PC-3 (cell line): ENCODE measurements at regions of chr3 and their contacts with region 1.

Region 1: GRCh38 chr3:3836845-3837244 is 37.6 kb downstream of the LRRN1 start:
- DNase-seq: no peak
- ATAC-seq: no peak
- H3K4me3 ChIP-seq: no peak overlapping the region
- H3K27ac ChIP-seq: no peak overlapping the region
- H3K4me1 ChIP-seq: no peaks in the 10 kb centered on the region
- H3K27me3 ChIP-seq: no peaks in the 10 kb centered on the region
- CTCF ChIP-seq: no peak

Region 2: DNA sequence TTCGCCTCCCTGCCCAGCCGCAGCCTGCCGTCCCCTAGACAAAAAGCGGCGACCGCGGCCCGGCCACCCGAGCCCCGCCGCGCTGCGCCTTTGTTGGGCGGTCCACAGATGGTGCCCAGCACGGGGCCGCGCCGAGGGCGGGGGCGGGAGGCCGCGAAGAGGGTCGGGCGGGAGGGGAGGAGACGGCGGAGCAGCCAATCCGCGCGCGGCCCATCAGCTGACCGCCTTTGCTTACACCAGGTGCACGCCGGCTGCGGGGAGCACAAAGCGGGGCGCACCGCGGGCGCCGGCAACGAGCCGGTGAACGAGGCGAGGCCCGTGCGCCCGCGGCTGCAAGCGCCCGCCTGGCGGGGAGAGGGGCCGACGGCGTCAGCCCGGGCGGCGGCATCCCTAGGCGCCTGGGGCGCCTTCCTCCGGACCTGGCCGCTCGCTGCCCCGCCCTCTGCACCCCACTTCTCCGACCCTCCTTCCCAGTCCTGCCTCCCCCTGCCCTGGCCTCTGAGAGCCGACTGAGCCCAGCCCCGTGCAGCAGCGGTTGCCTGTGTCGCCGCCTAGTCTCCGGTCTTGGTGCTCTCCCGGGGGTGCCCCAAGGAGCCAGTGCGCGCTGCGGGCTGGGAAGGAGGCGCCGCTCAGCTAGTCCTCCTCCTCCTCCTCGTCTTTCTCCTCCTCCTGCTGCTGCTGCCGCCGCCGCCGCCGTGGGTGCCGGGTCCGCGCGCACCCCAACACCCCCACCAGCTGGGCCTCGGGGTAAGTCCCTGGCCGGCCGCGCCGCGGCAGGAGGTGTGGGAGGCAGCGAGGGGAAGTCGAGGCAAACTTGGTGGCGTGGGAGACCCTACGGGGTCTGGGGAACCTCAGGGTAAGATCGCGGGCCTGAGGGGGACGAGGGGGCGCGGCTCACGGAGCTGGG is 37.4 kb before region 1 on chr3 and contains the start of gene LRRN1:
- CTCF ChIA-PET with region 1: no interaction called
- POLR2A ChIA-PET with region 1: no interaction called
- intact Hi-C with region 1: no loop called
- DNase-seq: no peak
- ATAC-seq: no peak
- H3K4me3 ChIP-seq: no peak within 1 kb of the TSS
- H3K27ac ChIP-seq: no peak within 1 kb of the TSS
- H3K4me1 ChIP-seq: no peaks in the 10 kb centered on the region
- H3K27me3 ChIP-seq: no peaks in the 10 kb centered on the region
- CTCF ChIP-seq: no peak
- total RNA-seq, gene LRRN1: not detected in 2 replicates

Region 3: DNA sequence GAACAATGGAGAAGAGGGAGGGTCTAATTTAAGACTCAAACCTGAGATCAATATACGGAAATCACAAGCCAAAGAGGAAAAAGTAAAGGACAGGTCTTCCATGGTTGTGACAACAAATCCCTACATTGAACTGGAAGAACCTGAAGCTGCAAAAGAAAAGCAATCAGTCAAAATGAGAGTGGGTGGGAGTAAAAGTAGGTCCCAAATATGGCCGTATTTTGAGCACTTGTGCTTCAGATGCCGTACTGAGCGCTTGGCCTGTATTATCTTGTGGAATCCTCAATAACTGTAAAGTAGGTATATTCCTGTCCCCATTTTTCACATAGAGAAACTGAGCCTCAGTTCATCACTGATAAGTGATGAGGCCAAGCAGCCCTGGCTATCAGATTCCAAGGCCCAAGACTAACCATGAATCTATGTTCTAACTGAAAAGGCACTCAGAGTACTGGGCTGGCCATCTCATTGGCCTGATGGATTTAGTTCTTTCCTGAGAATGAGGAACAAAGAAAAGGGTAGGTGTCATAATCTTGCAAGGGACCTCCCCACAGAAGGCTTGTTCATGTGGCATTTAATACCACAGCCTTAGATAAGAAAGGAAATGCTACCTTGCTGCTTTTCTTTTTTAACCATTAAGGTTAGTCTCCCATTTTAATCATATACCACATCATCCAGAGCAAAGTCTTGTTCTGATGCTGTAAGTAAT is 14.9 kb after region 1 on chr3:
- CTCF ChIA-PET with region 1: no interaction called
- POLR2A ChIA-PET with region 1: no interaction called
- intact Hi-C with region 1: no loop called
- DNase-seq: no peak
- ATAC-seq: no peak
- H3K4me3 ChIP-seq: no peak overlapping the region
- H3K27ac ChIP-seq: no peak overlapping the region
- H3K4me1 ChIP-seq: no peaks in the 10 kb centered on the region
- H3K27me3 ChIP-seq: no peaks in the 10 kb centered on the region
- CTCF ChIP-seq: no peak

Region 4: DNA sequence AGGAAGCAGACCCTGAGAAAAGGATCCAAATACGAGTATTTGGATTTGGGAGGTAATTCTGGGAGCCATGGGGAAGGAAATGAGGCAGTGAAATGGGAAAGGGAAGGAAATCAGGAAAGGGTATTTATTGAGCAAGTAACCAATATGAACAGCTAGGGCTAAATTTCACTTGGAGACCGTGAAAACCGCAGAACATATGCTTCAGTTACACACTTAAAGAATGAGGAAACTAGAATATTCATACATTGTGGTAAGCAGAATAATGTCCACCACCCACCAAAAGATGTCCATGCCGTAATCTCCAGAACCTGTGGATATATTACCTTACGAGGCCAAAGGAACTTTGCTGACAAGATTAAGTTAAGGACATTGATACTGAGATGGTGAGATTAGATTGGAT is 25.7 kb after region 1 on chr3:
- CTCF ChIA-PET with region 1: interaction called, 11 read pairs
- POLR2A ChIA-PET with region 1: no interaction called
- intact Hi-C with region 1: no loop called
- DNase-seq: no peak
- ATAC-seq: no peak
- H3K4me3 ChIP-seq: no peak overlapping the region
- H3K27ac ChIP-seq: no peak overlapping the region
- H3K4me1 ChIP-seq: no peaks in the 10 kb centered on the region
- H3K27me3 ChIP-seq: no peaks in the 10 kb centered on the region
- CTCF ChIP-seq: no peak